CD4-positive, alpha-beta T cell (primary cell): ENCODE measurements at regions of chr5 and their contacts with region 1.

Region 1: DNA sequence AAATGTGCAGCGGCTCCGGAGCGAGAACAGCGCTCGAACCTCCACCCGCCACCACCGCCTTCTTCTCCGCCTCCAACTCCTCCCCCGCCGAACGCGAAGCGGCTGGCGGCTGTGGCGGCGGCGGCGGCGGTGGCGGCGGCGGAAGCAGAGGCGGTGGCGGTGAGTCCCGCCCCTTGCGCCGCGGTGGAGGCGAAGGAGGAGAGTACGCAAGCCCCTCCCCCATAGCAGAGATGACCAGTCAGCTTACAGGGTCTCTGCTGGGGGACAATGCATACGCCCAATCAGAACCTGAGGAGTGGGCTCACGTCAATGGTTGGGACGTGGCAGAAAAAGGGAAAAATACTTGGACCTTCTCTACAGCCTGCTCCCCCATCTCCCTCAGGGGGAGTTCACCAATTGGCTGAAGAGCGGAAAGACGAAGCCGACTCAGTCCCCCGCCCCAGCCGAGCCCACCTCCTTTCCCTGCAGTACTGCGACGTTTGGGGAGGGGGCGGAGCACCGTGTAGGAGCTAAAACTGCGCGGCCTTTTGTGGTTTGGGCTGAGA is at the start of gene PJA2:
- DNase-seq: peak; percentile 91 to 99 (median 96)
- ATAC-seq: peak; percentile 75
- H3K4me3 ChIP-seq: peak within 1 kb of the TSS; percentile 92
- H3K4me3 Mint-ChIP-seq: peak within 1 kb of the TSS; percentile 100
- H3K27ac ChIP-seq: peak within 1 kb of the TSS; percentile 98 to 99
- H3K27ac Mint-ChIP-seq: peak within 1 kb of the TSS; percentile 99
- H3K4me1 ChIP-seq: peaks cover 10% of the 10 kb centered on the region
- H3K4me1 Mint-ChIP-seq: peaks cover 52% of the 10 kb centered on the region
- H3K27me3 ChIP-seq: no peaks in the 10 kb centered on the region
- H3K27me3 Mint-ChIP-seq: no peaks in the 10 kb centered on the region
- CTCF ChIP-seq: no peak
- total RNA-seq, gene PJA2: 88.8 to 92.9 TPM

Region 2: DNA sequence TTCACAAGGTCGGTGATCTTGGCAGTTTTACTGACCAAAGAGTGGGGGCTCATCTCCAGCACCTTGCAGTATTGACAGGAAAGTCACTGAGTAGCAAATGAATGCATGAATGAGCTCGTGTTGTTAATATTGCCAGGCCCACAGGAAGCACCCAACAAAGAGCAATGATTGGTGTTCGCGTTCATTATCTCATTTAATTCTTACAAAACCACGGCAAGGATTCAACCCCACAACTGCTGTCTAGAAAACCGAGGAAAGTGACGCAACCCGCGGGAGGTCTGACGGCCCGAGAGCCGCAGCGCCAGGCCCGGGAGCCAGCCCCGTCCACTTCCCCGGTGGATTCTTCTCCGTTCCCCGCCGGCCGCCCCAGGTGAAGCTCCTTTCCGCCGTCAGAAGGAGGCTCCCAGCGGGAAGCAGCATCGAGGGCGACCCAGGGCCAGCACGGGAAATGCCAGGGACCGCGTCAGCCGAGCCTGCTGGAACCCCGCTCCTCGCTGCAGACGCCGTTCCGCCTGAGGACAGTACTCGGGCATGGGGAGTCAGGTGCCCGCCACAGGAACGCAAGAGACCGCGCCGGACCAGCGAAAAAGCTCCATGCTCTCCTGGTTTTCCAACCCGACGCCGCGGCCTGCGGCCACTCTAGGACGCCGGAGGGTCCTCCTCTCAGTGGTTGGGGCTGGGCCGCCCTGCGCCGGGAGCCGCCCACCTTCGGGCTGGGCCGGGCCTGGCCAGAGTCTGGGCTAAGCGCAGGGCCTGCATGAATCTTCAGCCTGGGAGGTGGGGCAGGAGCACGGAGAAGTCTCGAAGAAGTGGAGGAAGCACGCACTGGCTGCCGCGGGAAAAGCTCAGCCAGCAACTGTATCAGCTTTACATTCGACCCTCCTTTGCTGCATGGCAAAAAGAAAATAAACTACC is 682.0 kb before region 1 on chr5:
- CTCF ChIA-PET with region 1: no interaction called
- POLR2A ChIA-PET with region 1: interaction called, 10 read pairs
- intact Hi-C with region 1: no loop called
- DNase-seq: peak; percentile 5 to 68 (median 26)
- ATAC-seq: peak; percentile 61
- H3K4me3 ChIP-seq: peak overlapping the region; percentile 89
- H3K4me3 Mint-ChIP-seq: peak overlapping the region; percentile 82
- H3K27ac ChIP-seq: peak overlapping the region; percentile 39 to 48
- H3K27ac Mint-ChIP-seq: peak overlapping the region; percentile 63
- H3K4me1 ChIP-seq: peaks cover 19% of the 10 kb centered on the region
- H3K4me1 Mint-ChIP-seq: peaks cover 22% of the 10 kb centered on the region
- H3K27me3 ChIP-seq: peaks cover 4 to 22% of the 10 kb centered on the region in 2 experiments
- H3K27me3 Mint-ChIP-seq: peaks cover 35% of the 10 kb centered on the region
- CTCF ChIP-seq: no peak

Region 3: DNA sequence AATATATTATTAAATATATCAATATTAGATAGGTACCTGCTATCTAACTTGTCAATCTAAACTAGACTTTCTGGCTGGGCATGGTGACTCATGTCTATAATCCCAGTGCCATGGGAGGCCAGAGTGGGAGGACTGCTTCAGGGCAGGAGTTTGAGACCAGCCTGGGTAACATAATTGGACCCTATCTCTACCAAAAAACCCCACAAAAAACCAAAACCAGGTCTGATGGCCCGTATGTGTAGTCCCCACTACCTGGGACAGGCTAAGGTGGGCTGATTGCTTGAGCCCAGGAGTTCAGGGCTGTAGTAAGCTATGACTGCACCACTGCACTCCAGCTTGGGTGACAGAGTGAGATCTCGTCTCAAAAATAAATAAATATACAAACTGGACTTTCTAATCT is 55.2 kb before region 1 on chr5:
- CTCF ChIA-PET with region 1: no interaction called
- POLR2A ChIA-PET with region 1: interaction called, 3 read pairs
- intact Hi-C with region 1: loop called in 1 of 2 experiments (anchors 10 kb)
- DNase-seq: no peak
- ATAC-seq: no peak
- H3K4me3 ChIP-seq: no peak overlapping the region
- H3K4me3 Mint-ChIP-seq: no peak overlapping the region
- H3K27ac ChIP-seq: no peak overlapping the region
- H3K27ac Mint-ChIP-seq: no peak overlapping the region
- H3K4me1 ChIP-seq: no peaks in the 10 kb centered on the region
- H3K4me1 Mint-ChIP-seq: peaks cover 34% of the 10 kb centered on the region
- H3K27me3 ChIP-seq: no peaks in the 10 kb centered on the region
- H3K27me3 Mint-ChIP-seq: no peaks in the 10 kb centered on the region
- CTCF ChIP-seq: no peak

Region 4: DNA sequence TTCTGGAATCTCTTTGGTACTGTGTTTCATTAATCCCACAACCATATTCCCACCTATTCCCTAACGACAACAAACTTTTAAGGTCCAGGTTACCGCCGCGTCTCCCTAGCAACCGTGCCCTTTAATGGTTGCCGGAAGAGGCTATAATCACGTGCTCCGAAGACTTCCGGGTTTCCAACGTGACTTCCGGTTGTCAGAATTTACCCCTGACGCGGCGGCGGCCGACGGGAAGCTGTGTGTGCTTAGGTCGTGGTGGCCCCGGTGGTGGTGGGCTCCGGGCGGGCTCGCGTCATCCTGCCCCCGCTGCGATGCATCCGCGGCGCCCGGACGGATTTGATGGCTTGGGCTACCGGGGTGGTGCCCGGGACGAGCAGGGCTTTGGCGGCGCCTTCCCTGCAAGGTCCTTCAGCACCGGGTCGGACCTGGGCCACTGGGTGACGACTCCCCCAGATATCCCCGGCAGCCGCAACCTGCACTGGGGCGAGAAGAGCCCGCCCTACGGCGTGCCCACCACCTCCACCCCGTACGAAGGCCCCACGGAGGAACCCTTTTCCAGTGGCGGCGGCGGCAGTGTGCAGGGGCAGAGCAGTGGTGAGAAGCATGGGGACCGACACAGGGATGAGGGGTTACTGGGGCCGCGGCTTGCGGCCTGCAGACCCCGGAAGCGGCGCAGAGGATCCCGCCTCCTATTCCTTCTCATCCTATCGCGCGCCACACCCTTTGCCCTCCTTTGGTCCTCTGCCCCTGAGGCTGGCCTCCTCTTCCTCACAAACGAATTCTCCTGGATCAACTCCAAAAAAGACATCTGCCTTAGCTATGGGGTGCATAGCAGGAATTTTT is 1329.1 kb after region 1 on chr5 and contains the start of gene SLC25A46:
- CTCF ChIA-PET with region 1: no interaction called
- POLR2A ChIA-PET with region 1: interaction called, 11 read pairs
- intact Hi-C with region 1: loop called (anchors 2 to 5 kb)
- DNase-seq: peak; percentile 77 to 95 (median 82)
- ATAC-seq: peak; percentile 78
- H3K4me3 ChIP-seq: peak within 1 kb of the TSS; percentile 92
- H3K4me3 Mint-ChIP-seq: peak within 1 kb of the TSS; percentile 96
- H3K27ac ChIP-seq: peak within 1 kb of the TSS; percentile 91 to 92
- H3K27ac Mint-ChIP-seq: peak within 1 kb of the TSS; percentile 94
- H3K4me1 ChIP-seq: peaks cover 11% of the 10 kb centered on the region
- H3K4me1 Mint-ChIP-seq: peaks cover 40% of the 10 kb centered on the region
- H3K27me3 ChIP-seq: no peaks in the 10 kb centered on the region
- H3K27me3 Mint-ChIP-seq: peaks cover 13% of the 10 kb centered on the region
- CTCF ChIP-seq: no peak
- total RNA-seq, gene SLC25A46: 14.0 to 16.1 TPM